BJ (cell line): ENCODE measurements at regions of chr14 and their contacts with region 1.

Region 1: GRCh38 chr14:92783816-92784431 is 10.2 kb upstream of the GOLGA5 start:
- DNase-seq: no peak
- H3K4me3 ChIP-seq: no peak overlapping the region
- H3K27me3 ChIP-seq: no peaks in the 10 kb centered on the region
- CTCF ChIP-seq: peak; percentile 60

Region 2: DNA sequence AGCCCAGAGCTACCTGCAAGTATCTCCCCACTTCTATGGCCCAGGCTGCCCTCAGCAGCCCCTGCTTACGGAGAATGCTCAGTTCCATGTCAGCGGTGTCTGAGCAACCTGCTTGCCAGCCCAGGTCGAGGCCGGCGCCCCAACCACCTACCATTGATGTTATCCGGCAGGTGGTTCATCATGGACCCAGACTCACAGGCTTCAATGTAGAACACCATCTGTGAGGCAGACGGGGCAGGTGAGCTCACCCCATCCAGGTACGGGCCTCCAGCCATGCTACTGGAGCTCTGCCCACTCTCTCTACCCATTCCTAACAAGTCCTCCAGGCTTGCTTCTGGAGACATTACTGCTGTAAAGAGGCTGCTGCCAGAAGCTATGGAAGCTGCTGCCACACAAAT is 71.3 kb before region 1 on chr14:
- CTCF ChIA-PET with region 1: interaction called, 67 read pairs
- POLR2A ChIA-PET with region 1: no interaction called
- DNase-seq: no peak
- H3K4me3 ChIP-seq: no peak overlapping the region
- H3K27me3 ChIP-seq: no peaks in the 10 kb centered on the region
- CTCF ChIP-seq: no peak

Region 3: GRCh38 chr14:92719890-92720323 is 64.0 kb before region 1 on chr14:
- CTCF ChIA-PET with region 1: interaction called, 67 read pairs
- POLR2A ChIA-PET with region 1: no interaction called
- DNase-seq: peak; percentile 14
- H3K4me3 ChIP-seq: no peak overlapping the region
- H3K27me3 ChIP-seq: no peaks in the 10 kb centered on the region
- CTCF ChIP-seq: no peak

Region 4: GRCh38 chr14:92737206-92737605 is 46.7 kb before region 1 on chr14:
- CTCF ChIA-PET with region 1: no interaction called
- POLR2A ChIA-PET with region 1: interaction called, 11 read pairs
- DNase-seq: no peak
- H3K4me3 ChIP-seq: no peak overlapping the region
- H3K27me3 ChIP-seq: no peaks in the 10 kb centered on the region
- CTCF ChIP-seq: no peak

Region 5: GRCh38 chr14:92770484-92770883 is 13.4 kb before region 1 on chr14:
- CTCF ChIA-PET with region 1: interaction called, 15 read pairs
- POLR2A ChIA-PET with region 1: interaction called, 4 read pairs
- DNase-seq: no peak
- H3K4me3 ChIP-seq: no peak overlapping the region
- H3K27me3 ChIP-seq: no peaks in the 10 kb centered on the region
- CTCF ChIP-seq: no peak

Region 6: GRCh38 chr14:92793709-92794546 is 10.0 kb after region 1 on chr14 and contains the start of gene GOLGA5:
- CTCF ChIA-PET with region 1: interaction called, 11 read pairs
- POLR2A ChIA-PET with region 1: no interaction called
- DNase-seq: peak; percentile 83
- H3K4me3 ChIP-seq: peak within 1 kb of the TSS; percentile 92
- H3K27me3 ChIP-seq: no peaks in the 10 kb centered on the region
- CTCF ChIP-seq: no peak
- polyA plus RNA-seq, gene GOLGA5: 29.7 and 52.2 TPM in 2 replicates